ENCODE measurements at regions of chr18 and their contacts with region 1.

Region 1: DNA sequence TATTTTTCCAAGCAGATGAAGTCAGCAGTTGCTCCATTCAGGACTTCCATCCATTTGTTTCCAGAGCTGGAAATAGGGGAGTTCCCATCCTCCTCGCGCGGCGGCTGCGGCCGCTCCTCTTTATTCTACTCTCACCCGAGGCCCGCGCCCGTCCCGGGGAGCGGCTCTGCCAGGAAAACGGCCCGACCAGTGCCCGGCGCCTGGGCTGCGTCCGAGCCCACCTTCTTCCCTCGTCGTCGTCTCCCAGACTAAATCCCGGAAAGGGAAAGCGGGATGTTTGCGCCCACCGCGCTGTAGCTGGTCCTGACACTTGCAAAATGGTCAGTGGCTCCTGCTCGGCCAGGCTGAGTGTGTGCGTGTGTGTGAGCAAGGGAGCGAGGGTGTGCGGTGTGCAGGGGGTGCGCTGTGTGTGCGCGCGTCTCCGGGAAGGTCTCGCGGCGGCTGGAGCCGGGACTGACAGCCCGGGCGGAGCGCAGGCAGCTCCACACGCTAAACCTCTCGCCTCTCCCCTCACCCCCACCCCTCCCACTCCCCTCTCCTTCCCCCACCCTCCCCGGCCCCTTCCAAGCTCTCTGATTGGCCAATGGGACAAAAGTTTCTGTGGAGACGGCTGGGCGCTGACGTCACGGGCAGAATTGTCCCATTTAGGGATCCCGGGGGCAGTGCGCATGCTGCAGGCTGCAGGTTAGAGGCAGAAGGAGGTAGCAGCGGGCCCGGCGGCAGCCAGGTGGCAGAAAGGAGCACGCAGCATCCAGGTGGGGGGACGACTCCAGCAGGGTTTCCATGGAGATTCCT is at the start of gene NOL4:
- DNase-seq: peak; percentile 63 to 94 (median 89)
- H3K4me3 ChIP-seq: peak within 1 kb of the TSS; percentile 48 to 88 (median 73)
- H3K27ac ChIP-seq: peak within 1 kb of the TSS in 58 of 59 donors; percentile 49 to 95 (median 87)
- H3K27me3 ChIP-seq: peaks cover 0 to 26% (median 0%) of the 10 kb centered on the region in 45 donors
- CTCF ChIP-seq: peak in 52 of 56 donors; percentile 20 to 69 (median 48)
- total RNA-seq, gene NOL4: 16.4 to 90.6 (median 56.2) TPM

Region 2: GRCh38 chr18:33577685-33578517 is 646.7 kb before region 1 on chr18 and contains the start of gene ASXL3:
- intact Hi-C with region 1: loop called (anchors 5 to 10 kb)
- DNase-seq: peak; percentile 12 to 75 (median 56)
- H3K4me3 ChIP-seq: peak within 1 kb of the TSS; percentile 52 to 92 (median 80)
- H3K27ac ChIP-seq: peak within 1 kb of the TSS; percentile 78 to 99 (median 95)
- H3K27me3 ChIP-seq: no peaks in the 10 kb centered on the region
- CTCF ChIP-seq: peak in 8 of 56 donors; percentile 5 to 18 (median 10)
- total RNA-seq, gene ASXL3: 15.5 to 51.3 (median 34.2) TPM

Region 3: GRCh38 chr18:34158881-34159690 is 65.5 kb before region 1 on chr18:
- intact Hi-C with region 1: loop called in 1 of 2 experiments (anchors 2 kb)
- DNase-seq: peak; percentile 35 to 81 (median 68)
- H3K4me3 ChIP-seq: peak overlapping the region; percentile 47 to 82 (median 69)
- H3K27ac ChIP-seq: peak overlapping the region in 58 of 59 donors; percentile 28 to 95 (median 87)
- H3K27me3 ChIP-seq: no peaks in the 10 kb centered on the region
- CTCF ChIP-seq: peak in 53 of 56 donors; percentile 10 to 69 (median 47)